A549 (cell line): ENCODE measurements at regions of chr7 and their contacts with region 1.

Region 1: GRCh38 chr7:34087892-34088891 is 182.9 kb downstream of the BMPER start:
- DNase-seq: peak in 1 of 2 experiments; percentile 62
- ATAC-seq: peak; percentile 90 to 97; a peak in 5 of 6 replicates
- H3K4me3 ChIP-seq: no peak overlapping the region
- H3K27ac ChIP-seq: peak overlapping the region; percentile 64 to 81
- H3K4me1 ChIP-seq: peaks cover 16% of the 10 kb centered on the region
- CTCF ChIP-seq: peak; percentile 57
- EP300 ChIP-seq: no peak
- POLR2A ChIP-seq: no peak
- RAD21 ChIP-seq: peak; percentile 62 to 66

Region 2: GRCh38 chr7:34036051-34036945 is 51.9 kb before region 1 on chr7:
- CTCF ChIA-PET with region 1: no interaction called
- POLR2A ChIA-PET with region 1: no interaction called
- DNase-seq: peak; percentile 21 to 80
- ATAC-seq: peak; percentile 82 to 88
- H3K4me3 ChIP-seq: 0 out of 3 replicates have a peak overlapping the region, but pooled peaks have one; percentile 3
- H3K27ac ChIP-seq: peak overlapping the region; percentile 87 to 88
- H3K4me1 ChIP-seq: peaks cover 50% of the 10 kb centered on the region
- CTCF ChIP-seq: no peak
- EP300 ChIP-seq: peak; percentile 94 to 97; a peak in 4 of 5 replicates
- POLR2A ChIP-seq: no peak
- RAD21 ChIP-seq: peak in 1 of 2 experiments; percentile 59; a peak in 2 of 5 replicates

Region 3: DNA sequence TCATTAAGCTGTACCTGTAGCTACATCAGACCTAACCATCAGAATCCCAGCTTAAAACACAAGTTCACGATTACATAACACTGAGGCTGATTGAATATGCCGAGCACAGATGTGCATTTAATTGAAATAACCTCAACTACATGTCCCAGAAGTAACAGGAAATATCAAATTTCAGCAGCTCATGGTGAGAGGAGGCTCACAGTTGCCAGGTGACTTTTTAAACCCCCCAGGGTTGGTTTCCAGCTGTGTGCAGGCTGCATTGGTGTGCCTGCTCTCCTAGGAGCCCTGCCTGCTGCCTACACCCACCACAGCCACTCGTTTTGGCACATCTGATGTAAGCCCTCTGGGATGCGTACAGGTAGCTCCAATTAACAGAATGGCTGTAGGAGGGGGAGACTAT is 21.2 kb before region 1 on chr7:
- CTCF ChIA-PET with region 1: interaction called, 14 read pairs
- POLR2A ChIA-PET with region 1: no interaction called
- DNase-seq: no peak
- ATAC-seq: no peak
- H3K4me3 ChIP-seq: no peak overlapping the region
- H3K27ac ChIP-seq: peak overlapping the region; percentile 92
- H3K4me1 ChIP-seq: peaks cover 89% of the 10 kb centered on the region
- CTCF ChIP-seq: no peak
- EP300 ChIP-seq: no peak
- POLR2A ChIP-seq: no peak
- RAD21 ChIP-seq: no peak

Region 4: DNA sequence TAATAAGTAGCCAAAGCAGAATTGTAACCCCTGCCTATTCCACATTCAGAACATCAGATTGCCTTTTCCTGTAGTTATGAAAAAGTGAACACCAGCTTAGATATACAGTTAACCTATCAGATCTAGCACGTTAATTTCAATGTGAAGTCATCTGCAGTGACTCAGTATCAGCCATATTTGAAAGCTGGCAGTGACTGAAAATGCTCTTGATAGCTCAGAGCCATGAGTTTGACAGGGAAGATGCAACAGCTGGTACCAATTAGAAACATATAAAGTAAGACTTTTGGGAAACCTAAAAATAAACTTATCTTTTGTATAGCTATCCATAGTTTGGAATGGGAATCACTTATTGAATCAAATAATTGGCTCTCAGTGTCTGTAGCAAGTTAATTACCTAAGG is 285.7 kb after region 1 on chr7:
- CTCF ChIA-PET with region 1: no interaction called
- POLR2A ChIA-PET with region 1: no interaction called
- DNase-seq: no peak
- ATAC-seq: no peak
- H3K4me3 ChIP-seq: no peak overlapping the region
- H3K27ac ChIP-seq: no peak overlapping the region
- H3K4me1 ChIP-seq: no peaks in the 10 kb centered on the region
- CTCF ChIP-seq: no peak
- EP300 ChIP-seq: no peak
- POLR2A ChIP-seq: no peak
- RAD21 ChIP-seq: no peak